Activated naive CD4-positive, alpha-beta T cell treated with anti-CD3 and anti-CD28 coated beads for 36 hours (primary cell): ENCODE measurements at regions of chr19 and their contacts with region 1.

Region 1: DNA sequence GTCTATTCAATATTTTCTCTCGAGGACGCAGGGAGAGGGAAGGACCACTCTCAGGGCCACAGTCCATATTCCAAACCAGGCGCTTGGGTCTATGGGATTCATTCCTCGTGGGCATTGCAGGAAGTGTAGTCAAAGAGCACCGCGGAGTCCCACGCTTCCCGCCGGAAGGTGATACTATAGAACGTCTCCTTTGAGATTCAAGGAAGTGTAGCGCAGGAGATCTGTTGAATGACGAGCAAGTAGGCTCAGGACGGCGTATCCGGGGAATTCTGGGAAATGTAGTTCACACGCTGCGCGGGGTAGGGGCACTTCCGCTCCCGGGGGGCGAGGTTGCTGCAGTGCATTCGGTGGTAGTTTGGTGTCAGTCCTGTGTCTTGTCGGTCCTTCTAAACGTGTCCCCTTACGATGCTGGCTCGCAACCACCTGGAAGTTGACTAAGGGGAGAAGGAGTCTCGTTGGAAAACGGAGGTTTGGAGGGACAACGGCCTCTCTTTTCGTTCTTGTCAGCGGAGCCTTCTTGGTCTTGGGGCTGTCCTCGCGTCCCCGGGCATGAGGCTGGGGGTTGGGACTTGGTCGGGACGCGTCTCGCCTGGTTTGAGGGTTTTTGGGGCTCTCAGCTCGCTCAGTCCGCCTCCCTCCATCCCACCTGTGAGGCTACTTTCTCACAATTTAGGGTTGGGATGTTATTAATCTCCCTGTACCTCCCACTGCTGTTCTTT is at the start of gene ZNF284:
- DNase-seq: peak; percentile 87
- H3K4me3 Mint-ChIP-seq: peak within 1 kb of the TSS; percentile 86
- H3K27ac Mint-ChIP-seq: peak within 1 kb of the TSS; percentile 13
- H3K4me1 Mint-ChIP-seq: peaks cover 19% of the 10 kb centered on the region
- H3K27me3 Mint-ChIP-seq: no peaks in the 10 kb centered on the region
- total RNA-seq, gene ZNF284: 0.76 to 0.86 TPM

Region 2: DNA sequence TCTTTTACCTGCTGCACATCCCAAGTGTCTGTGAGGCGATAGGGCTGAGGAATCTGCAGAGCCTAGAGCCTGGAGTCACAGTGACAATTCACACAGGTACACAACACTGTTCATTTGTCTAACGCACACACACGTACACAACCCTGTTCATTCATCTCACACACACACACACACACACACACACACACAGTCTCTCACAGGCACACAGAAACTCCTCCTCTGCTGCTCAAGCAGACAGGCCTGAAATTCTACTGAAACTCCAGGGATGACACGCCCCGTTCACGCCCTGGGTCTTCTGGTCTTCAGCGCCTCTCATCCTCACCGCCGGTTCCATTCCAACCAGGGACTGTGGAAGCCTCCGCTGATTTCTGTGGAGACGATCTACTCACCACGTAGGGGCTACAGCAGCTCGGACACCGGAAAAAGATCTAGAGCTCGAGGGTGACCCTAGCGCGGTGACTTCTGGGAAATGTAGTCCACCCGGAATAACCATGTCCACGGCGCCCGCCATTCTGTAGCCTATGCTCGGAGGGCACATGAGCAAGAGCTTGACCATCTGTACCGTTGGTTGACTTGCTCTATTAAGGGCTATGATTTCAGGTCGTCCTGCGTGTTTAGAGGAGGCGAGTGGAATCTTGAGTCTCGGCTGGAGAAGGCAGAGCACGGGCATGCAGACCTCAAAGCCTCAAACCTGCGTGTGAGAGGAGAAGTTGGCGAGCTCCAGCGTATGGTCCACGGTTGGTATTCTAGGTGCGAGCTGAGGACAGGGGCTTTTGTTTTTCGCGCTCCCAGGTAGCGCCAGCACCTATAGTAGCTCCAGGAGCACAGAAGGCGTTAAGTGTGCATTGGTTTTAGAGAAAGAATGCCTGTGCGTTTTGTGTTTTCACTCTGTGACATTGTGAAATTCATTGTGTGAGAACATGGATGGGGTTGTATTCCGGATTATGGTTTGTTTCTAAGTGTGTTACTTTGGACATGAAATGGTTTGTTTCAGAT is 170.3 kb before region 1 on chr19:
- CTCF ChIA-PET with region 1: no interaction called
- intact Hi-C with region 1: loop called (anchors 5 kb)
- DNase-seq: peak; percentile 75
- H3K4me3 Mint-ChIP-seq: peak overlapping the region; percentile 86
- H3K27ac Mint-ChIP-seq: peak overlapping the region; percentile 68
- H3K4me1 Mint-ChIP-seq: peaks cover 17% of the 10 kb centered on the region
- H3K27me3 Mint-ChIP-seq: no peaks in the 10 kb centered on the region

Region 3: DNA sequence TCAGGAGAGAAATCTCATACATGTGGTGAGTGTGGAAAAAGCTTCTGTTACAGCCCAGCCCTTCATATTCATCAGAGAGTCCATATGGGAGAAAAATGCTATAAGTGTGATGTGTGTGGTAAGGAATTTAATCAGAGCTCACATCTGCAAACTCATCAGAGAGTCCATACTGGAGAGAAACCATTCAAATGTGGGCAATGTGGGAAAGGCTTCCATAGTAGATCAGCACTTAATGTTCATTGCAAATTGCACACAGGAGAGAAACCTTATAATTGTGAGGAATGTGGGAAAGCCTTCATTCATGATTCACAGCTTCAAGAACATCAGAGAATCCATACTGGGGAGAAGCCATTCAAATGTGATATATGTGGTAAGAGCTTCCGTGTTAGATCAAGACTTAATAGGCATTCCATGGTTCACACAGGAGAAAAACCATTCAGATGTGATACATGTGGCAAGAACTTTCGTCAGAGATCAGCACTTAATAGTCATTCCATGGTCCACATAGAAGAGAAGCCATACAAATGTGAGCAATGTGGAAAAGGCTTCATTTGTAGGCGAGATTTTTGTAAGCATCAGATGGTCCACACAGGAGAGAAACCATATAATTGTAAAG is 105.8 kb before region 1 on chr19:
- CTCF ChIA-PET with region 1: no interaction called
- intact Hi-C with region 1: no loop called
- DNase-seq: no peak
- H3K4me3 Mint-ChIP-seq: no peak overlapping the region
- H3K27ac Mint-ChIP-seq: no peak overlapping the region
- H3K4me1 Mint-ChIP-seq: no peaks in the 10 kb centered on the region
- H3K27me3 Mint-ChIP-seq: no peaks in the 10 kb centered on the region

Region 4: DNA sequence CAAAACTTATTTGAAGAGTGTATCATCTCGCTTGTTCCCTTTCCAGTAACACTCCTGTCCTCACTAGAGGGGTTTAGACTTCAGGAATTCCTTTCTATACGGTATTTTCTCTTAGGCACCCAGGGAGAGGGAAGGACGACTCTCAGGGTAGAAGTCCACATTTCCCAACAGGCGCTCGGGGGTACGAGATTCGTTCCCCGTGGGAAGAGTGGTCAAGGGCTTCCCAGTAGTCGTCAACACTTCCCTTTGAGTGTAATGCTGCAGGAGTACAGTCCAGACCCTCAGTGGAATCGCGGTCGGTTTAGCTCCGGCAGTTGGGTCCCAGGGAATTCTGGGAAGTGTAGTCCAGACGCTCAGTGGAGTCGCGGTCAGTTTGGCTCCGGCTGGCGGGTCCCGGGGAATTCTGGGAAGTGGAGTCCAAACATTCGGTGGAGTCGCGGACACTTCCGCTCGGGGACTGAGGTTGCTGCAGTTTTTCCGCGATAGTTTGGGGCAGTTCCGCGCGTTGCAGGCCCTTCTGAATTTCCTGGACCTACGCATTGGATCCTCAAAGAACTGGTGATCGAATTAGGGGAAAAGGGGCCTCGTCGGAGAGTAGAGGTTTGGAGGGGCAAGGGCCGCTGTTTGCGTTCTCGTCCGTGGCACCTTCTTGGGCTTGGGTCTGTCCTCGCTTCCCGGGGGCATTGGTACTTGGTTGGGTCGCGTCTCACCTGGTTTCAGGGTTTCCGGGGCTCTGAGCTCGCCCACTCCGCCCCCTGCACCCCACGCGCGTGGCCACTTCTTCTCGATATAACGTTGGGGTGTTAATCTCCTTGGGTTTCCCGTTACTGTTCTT is 22.2 kb after region 1 on chr19 and contains the start of gene ZNF224:
- CTCF ChIA-PET with region 1: no interaction called
- intact Hi-C with region 1: loop called (anchors 1 kb)
- DNase-seq: peak; percentile 91
- H3K4me3 Mint-ChIP-seq: peak within 1 kb of the TSS; percentile 98
- H3K27ac Mint-ChIP-seq: peak within 1 kb of the TSS; percentile 87
- H3K4me1 Mint-ChIP-seq: peaks cover 13% of the 10 kb centered on the region
- H3K27me3 Mint-ChIP-seq: no peaks in the 10 kb centered on the region
- total RNA-seq, gene ZNF224: 8.7 to 10.9 TPM

Region 5: DNA sequence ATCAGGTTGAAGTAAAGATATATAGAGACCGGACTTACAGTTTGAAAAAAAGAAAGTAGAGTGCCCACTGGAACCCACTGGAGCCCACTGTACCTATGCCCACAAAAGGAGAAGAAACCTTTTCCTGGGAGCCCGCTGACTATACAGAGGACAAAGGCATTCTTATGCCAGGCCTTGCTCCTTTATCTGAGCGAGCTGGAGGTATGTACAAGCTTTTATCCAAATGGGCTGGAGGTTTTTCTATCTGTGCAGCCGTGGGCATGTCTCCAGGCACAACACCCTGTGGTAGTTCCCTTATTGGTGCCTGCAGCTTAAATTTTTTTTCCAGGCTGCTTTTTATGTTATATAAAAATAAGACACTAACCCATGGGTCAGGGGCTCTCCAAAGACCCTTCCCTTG is 77.8 kb after region 1 on chr19:
- CTCF ChIA-PET with region 1: no interaction called
- intact Hi-C with region 1: no loop called
- DNase-seq: no peak
- H3K4me3 Mint-ChIP-seq: no peak overlapping the region
- H3K27ac Mint-ChIP-seq: no peak overlapping the region
- H3K4me1 Mint-ChIP-seq: no peaks in the 10 kb centered on the region
- H3K27me3 Mint-ChIP-seq: no peaks in the 10 kb centered on the region

Region 6: DNA sequence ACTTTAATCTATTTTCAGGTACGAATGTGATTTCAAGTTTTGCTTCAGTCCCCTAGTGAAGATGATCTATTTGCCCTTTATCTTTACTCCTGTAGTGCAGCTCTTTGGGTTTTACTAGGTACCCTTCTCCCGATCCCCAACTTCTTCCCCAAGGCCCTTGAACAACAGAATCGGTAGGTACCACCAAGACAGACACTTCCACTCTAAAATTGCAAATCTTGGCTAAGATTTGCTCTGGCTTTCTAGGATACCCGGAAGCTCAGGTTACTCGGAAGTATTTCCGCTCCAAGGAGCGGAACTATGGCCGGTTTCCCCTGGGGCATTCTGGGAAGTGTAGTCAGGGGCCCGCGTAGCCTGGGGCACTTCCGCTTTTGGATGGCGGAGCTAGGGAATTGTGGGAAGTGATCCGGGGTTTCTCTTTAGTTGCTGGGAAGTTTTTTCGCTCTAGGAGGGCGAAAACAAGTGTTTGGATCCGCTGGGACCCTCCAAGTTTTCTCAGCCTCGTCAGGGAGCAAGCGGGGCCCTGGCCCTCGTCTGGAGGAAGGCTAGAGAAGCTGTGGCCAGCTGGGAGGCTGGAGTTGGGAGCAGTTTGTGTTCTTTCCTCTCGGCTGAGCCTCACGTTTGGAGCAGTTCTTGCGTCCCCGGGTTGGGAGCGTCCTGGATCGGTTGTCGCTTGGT is 135.3 kb after region 1 on chr19:
- CTCF ChIA-PET with region 1: no interaction called
- intact Hi-C with region 1: loop called (anchors 1 kb)
- DNase-seq: peak; percentile 87
- H3K4me3 Mint-ChIP-seq: peak overlapping the region; percentile 80
- H3K27ac Mint-ChIP-seq: peak overlapping the region; percentile 63
- H3K4me1 Mint-ChIP-seq: peaks cover 5% of the 10 kb centered on the region
- H3K27me3 Mint-ChIP-seq: peaks cover 3% of the 10 kb centered on the region